AG04449 (cell line): ENCODE measurements at regions of chr12 and their contacts with region 1.

Region 1: GRCh38 chr12:123633379-123634141 is at the starts of genes EIF2B1 and GTF2H3:
- DNase-seq: peak; percentile 77
- H3K4me3 ChIP-seq: peak within 1 kb of the TSS; percentile 85
- CTCF ChIP-seq: no peak

Region 2: DNA sequence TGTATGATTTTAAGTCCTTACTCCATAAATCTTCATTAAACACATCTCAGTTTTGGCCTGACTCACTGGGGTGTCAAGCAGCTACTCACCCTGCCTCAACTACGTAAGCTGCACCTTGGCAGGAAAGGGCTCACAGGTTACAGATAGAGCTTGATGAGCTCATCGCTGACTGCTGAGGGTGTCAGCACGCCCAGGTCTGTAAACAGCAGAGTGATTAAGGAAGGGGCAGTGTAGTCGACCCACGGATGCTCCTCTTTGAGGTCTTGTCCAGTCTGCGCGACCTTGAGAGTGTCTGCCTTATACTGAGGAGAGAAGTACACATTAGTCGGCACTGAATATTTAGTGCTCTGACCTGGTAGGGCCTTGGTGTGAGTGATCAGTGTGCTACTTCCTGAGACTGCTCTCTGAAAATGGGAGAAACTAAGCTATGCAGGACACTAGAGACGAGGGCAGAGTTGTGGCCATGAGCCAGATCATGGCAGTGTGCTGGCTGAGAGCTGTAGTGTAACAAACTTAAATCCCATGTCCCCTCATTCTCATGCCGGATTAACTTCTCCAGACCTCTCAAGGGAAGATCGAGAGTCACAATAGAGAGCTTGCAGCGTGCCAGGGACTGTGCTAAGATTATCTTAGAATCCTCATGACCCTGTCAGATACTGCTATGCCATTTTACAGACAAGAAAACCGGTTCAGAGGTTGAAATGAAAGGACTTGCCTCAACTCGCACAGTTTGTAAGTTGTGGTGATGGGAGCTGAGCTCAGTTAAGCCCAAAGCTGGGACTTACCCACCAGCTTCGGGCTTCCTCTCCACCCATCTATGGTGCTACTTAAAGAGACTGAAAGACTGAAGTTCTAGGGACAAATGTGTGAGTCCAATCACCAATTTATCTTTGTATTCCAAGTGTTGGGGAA is 11.7 kb before region 1 on chr12:
- CTCF ChIA-PET with region 1: interaction called, 27 read pairs
- POLR2A ChIA-PET with region 1: no interaction called
- DNase-seq: no peak
- H3K4me3 ChIP-seq: no peak overlapping the region
- CTCF ChIP-seq: no peak

Region 3: GRCh38 chr12:123648401-123648800 is 14.8 kb after region 1 on chr12:
- CTCF ChIA-PET with region 1: no interaction called
- POLR2A ChIA-PET with region 1: no interaction called
- DNase-seq: no peak
- H3K4me3 ChIP-seq: no peak overlapping the region
- CTCF ChIP-seq: no peak